ENCODE measurements at regions of chr15 and their contacts with region 1.

Region 1: DNA sequence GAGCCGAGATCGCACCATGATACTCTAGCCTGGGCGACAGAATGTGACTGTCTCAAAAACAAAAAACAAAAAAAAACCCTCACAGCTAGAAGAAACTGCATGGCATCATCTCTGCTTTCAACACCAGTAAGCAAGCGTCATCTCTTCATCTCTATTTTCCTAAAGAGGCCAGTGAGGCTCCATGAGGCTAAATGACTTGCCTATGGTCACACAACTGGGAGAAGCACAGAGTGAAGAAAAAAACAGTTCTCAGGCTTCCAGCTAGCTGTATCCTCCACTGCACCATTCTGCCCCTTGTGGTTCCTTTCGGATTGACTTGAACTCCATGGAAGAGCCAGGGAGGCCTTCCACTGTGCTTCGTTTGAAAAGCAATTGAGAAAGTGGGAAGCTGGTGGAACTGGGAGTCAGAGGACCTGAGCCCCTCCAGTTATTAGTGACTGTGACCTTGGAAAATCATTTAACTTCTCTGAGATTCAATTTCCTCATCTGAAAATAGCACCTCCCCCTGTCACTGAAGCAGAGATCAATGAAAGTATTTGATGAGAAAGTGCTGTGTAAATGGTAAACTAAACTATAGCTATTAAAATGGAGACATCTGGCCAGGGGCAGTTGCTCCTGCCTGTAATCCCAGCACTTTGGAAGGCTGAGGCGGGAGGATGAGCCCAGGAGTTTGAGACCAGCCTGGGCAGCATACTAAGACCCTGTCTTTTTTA is 32.1 kb upstream of the DENND4A start:
- DNase-seq: peak in 4 of 6 donors; percentile 37 to 68 (median 62)
- ATAC-seq: peak; percentile 91 to 98 (median 96)
- H3K4me3 ChIP-seq: no peak overlapping the region
- H3K27ac ChIP-seq: no peak overlapping the region
- H3K4me1 ChIP-seq: peaks cover 3 to 14% (median 7%) of the 10 kb centered on the region in 3 donors
- H3K27me3 ChIP-seq: no peaks in the 10 kb centered on the region
- CTCF ChIP-seq: peak; percentile 24 to 57 (median 39)

Region 2: DNA sequence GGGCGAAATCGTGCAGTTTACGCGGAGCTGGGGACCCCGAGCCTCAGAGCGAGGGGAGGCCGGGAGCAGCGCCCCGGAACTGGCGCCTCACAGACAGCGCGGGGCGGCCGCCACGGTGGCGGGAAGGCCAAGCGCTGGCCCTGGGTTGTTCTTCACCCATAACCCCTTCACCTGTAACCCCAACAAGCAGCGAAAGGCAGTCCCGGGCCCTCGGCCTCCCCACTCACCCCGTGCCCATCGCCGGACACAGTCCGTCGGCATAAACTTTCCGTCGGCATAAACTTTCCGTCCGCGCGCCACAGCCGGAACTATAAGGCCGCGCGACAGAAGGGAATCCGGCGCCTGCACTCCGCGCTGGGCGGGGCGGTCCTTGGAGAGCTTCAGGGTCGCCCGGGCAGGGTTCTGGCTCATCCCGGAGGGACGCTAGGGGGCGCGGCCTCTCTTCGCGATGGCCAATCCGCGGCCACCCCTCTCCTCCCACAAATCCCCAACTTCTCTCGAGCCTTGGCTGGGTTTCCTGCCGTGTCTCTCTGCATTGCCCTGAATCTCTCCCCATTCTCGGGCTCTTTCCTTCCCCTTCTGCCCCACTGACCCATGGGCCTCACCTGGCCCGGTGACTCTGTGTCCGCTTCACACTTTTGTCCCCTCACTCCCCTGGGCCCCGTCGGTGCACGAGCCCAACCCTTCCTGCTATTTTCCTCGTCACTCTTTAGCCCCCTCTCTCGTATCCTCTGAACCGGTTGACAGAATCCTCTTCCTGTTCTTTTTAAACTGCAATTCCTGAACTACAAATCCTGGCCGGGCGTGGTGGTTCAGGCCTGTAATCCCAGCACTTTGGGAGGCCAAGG is 213.1 kb before region 1 on chr15 and contains the start of gene INTS14:
- intact Hi-C with region 1: no loop called
- DNase-seq: peak; percentile 96 to 99 (median 98)
- ATAC-seq: peak; percentile 97 to 99 (median 98)
- H3K4me3 ChIP-seq: peak within 1 kb of the TSS; percentile 72 to 91 (median 75)
- H3K27ac ChIP-seq: peak within 1 kb of the TSS; percentile 75 to 92 (median 88)
- H3K4me1 ChIP-seq: peaks cover 6 to 19% (median 12%) of the 10 kb centered on the region in 3 donors
- H3K27me3 ChIP-seq: no peaks in the 10 kb centered on the region
- CTCF ChIP-seq: peak; percentile 47 to 69 (median 54)
- total RNA-seq, gene INTS14: 11.8 to 19.8 (median 13.5) TPM

Region 3: DNA sequence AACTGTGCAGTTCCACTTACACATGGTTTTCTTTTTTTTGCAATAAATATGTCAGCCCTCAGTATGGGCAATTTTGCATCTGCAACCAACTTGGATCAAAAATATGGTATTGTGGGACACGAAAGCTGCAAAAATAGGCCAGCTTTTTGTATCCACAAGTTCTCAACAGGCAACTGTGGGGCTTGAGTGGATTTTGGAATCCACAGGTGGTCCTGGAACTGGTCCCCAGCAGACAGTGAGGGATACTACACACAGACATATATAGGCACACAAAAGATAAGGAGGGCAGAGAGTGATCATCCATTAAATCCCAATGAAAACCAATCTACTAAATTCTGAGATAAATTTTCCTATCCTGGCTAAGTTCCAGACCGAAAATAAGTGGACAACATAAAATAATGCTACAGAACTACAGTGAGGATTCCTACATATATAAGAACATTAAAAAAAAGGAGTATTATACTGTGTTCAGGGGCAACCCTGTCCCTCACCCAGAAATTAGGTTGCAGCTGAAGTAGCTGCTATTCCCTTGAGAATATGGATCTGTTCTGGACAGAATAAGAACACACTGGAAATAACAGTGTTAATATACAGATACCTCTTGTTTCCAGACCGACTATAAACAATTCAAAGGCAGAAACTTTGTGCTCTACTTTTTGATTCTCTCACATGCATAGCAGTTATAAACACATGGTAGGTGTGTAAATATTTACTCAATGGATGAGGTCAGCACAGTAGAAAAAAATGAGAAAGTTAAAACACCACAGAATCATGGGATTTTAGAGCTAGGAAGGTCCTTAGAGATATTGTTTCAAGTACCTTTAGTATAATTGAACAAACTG is 57.5 kb before region 1 on chr15:
- intact Hi-C with region 1: loop called in 1 of 3 experiments (anchors 10 kb)
- DNase-seq: no peak
- ATAC-seq: peak; percentile 87 to 91 (median 88)
- H3K4me3 ChIP-seq: no peak overlapping the region
- H3K27ac ChIP-seq: peak overlapping the region in 3 of 4 donors; percentile 3 to 67 (median 59)
- H3K4me1 ChIP-seq: peaks cover 23 to 35% (median 28%) of the 10 kb centered on the region in 3 donors
- H3K27me3 ChIP-seq: no peaks in the 10 kb centered on the region
- CTCF ChIP-seq: no peak

Region 4: DNA sequence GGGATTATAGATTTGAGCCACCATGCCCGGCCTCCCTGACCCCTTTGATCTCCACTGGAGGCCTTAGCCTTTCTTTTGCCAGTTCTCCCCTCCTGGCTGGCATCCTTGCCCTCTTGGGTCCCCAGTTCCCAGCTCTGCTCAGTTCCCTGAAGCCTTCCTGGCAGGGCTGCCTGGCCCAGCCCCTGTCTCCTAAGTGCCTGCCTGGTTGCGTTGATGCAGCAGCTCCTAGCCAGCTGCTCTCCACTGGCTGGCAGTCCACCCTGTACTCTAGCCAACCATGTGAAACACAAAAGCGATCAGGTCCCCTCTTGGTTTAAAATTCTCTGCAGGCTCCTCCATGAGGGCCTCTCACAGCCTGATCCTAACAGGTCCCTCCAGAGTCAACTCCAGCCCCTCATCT is 229.8 kb after region 1 on chr15:
- intact Hi-C with region 1: no loop called
- DNase-seq: no peak
- ATAC-seq: no peak
- H3K4me3 ChIP-seq: no peak overlapping the region
- H3K27ac ChIP-seq: no peak overlapping the region
- H3K4me1 ChIP-seq: no peaks in the 10 kb centered on the region
- H3K27me3 ChIP-seq: no peaks in the 10 kb centered on the region
- CTCF ChIP-seq: no peak

Measured in pancreas (tissue), 10 donors.